Ascending aorta (tissue), 2 donors: ENCODE measurements at regions of chr3 and their contacts with region 1.

Region 1: DNA sequence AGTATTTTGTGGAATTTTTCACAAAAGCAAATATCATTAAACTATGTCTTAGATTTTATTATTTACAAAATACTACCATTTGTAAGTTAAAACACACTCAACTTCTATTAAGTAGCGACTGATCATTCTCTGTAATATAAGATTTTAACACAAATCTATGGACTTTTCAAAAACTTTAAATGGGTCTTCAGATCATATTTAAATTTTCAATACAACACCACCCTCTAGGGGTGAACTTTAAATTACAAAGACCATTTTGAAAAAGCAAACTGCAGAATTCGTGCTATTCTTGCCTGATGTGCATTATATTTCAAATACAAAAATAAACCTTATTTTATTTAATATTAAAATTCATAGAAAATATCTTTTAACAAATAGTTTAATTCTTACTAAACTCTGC is 8.2 kb upstream of the VGLL4 start:
- DNase-seq: no peak
- H3K4me3 ChIP-seq: no peak overlapping the region
- H3K27ac ChIP-seq: no peak overlapping the region
- H3K4me1 ChIP-seq: peaks cover 0 to 5% of the 10 kb centered on the region in 2 donors
- H3K27me3 ChIP-seq: no peaks in the 10 kb centered on the region
- CTCF ChIP-seq: peak; percentile 29 to 56 (median 40)

Region 2: DNA sequence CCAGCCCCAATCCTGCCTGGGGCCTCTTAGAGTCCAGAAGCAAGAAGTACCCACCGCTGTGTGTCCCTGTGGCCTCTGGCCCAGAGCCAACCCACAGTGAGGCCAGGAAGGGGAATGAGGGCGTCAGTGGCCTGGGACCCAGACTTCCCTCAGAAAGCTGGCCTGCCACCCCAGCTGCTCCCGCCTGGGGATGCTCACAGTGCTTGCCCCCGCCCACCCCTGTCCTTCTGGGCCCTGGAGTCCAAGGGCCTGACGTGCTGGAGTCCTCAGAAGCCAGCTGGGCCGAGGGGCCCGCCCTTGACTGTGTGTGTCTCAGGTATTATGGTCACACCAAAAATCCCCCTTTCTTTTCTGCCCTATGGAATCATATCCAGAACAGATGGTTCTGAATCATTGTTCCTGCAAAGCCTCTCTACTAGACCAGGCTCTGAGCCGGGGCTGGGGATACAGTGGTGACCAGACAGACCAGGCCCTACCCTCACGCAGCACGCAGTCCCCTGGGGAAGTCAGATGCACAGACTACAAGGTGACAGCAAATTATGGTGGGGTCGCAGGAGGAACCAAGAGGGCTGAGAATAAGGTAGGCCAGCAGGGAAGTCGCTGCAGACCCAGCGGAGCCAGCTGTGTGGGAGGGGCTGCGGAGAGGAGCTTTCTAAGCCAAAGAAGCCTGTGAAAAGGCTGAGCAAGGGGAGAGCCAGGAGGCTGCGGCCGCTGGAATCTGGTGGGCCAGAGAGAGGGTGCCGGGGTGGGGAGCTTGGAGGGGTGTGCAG is 107.3 kb before region 1 on chr3:
- intact Hi-C with region 1: no loop called
- DNase-seq: no peak
- H3K4me3 ChIP-seq: no peak overlapping the region
- H3K27ac ChIP-seq: peak overlapping the region; percentile 45 to 67
- H3K4me1 ChIP-seq: peaks cover 0 to 32% of the 10 kb centered on the region in 2 donors
- H3K27me3 ChIP-seq: no peaks in the 10 kb centered on the region
- CTCF ChIP-seq: no peak

Region 3: DNA sequence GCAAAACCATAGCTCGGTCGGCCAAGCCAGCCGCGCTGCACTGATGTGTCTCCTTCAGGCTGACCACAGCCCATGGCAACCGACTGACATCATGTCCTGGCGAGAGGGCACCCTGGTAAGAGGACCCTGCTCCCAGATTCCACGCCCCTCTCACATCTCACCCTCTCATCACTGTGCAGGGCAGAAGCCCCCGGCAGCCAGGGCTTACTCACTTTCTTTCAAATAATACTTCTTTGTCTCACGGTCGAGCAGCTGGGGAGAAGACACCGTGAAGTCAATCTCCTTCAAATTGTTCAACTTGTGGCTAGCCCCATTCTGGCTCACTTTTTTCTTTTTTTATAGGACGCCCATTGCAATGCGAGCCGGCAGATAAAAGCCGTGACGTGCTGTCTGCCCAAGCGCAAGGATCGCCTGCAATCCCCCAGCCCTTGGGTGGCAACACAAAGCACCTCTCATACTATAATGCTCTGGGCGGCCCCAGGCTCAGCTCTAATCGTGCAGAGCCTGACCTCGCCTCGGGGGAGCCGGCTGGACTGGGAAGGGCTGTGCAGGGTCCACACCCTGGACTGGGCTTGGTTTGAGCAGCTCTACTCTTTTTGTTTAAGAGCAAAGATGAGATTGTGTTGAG is 41.7 kb before region 1 on chr3:
- intact Hi-C with region 1: no loop called
- DNase-seq: no peak
- H3K4me3 ChIP-seq: no peak overlapping the region
- H3K27ac ChIP-seq: no peak overlapping the region
- H3K4me1 ChIP-seq: peaks cover 9 to 18% of the 10 kb centered on the region in 2 donors
- H3K27me3 ChIP-seq: no peaks in the 10 kb centered on the region
- CTCF ChIP-seq: no peak

Region 4: DNA sequence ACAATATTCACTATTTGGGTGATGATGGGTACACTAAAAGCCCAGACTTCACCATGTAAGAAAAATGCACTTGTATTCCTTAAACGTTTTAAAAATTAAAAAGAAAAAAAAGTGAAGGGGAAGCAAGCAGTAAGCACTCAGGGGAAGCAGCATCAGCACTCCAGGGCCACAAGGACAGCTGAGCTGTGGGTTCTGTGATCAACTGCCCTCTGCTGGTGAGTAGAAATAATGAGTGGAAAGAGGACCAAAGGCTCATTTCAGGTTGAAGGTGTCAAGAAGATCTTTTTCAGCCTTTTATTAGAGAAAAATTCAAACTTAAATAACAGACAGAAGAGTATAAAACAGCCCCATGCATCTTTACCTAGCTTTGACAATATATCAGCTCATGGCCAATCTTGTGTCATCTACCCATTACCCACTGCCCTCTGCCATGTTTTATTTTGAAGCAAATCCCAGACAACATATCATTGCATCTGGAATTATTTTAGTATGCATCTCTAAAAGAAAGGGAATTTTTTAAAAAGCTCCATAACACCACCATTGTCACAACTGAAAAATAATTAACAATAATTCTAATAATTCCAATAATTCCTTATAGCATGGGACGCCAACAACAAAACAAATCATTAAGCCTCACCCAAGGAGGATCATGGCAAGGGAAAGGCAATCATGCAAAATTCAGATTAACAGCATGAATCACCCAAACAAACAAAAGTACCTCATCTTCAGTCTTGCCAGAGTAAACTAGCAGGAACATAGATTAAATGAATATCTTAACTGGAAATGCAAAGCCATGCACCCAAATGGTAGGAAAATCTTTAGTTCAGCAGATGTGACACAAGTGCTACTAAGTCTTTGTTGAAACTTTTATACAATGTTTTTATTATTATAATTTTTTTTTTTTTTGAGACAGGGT is 152.3 kb after region 1 on chr3:
- intact Hi-C with region 1: loop called (anchors 5 kb)
- DNase-seq: no peak
- H3K4me3 ChIP-seq: no peak overlapping the region
- H3K27ac ChIP-seq: no peak overlapping the region
- H3K4me1 ChIP-seq: no peaks in the 10 kb centered on the region
- H3K27me3 ChIP-seq: no peaks in the 10 kb centered on the region
- CTCF ChIP-seq: peak; percentile 61 to 77 (median 61)